ENCODE measurements at regions of chr9 and their contacts with region 1.

Region 1: GRCh38 chr9:133030317-133031129 is at the start of gene GTF3C5:
- DNase-seq: peak; percentile 83
- ATAC-seq: peak; percentile 97
- H3K4me3 Mint-ChIP-seq: peak within 1 kb of the TSS; percentile 99
- H3K27ac Mint-ChIP-seq: peak within 1 kb of the TSS; percentile 98
- H3K4me1 Mint-ChIP-seq: peaks cover 48% of the 10 kb centered on the region
- H3K27me3 Mint-ChIP-seq: no peaks in the 10 kb centered on the region
- CTCF ChIP-seq: no peak
- total RNA-seq, gene GTF3C5: 53.6 and 56.6 TPM in 2 replicates

Region 2: GRCh38 chr9:132944302-132945185 is 86.0 kb before region 1 on chr9 and contains the start of gene TSC1:
- CTCF ChIA-PET with region 1: no interaction called
- POLR2A ChIA-PET with region 1: interaction called, 21 read pairs
- intact Hi-C with region 1: loop called (anchors 1 kb)
- DNase-seq: peak; percentile 96
- ATAC-seq: peak; percentile 90
- H3K4me3 Mint-ChIP-seq: peak within 1 kb of the TSS; percentile 98
- H3K27ac Mint-ChIP-seq: peak within 1 kb of the TSS; percentile 100
- H3K4me1 Mint-ChIP-seq: peaks cover 29% of the 10 kb centered on the region
- H3K27me3 Mint-ChIP-seq: no peaks in the 10 kb centered on the region
- CTCF ChIP-seq: no peak
- total RNA-seq, gene TSC1: 51.7 and 61.4 TPM in 2 replicates

Region 3: GRCh38 chr9:133054966-133055365 is 24.4 kb after region 1 on chr9:
- CTCF ChIA-PET with region 1: no interaction called
- POLR2A ChIA-PET with region 1: no interaction called
- intact Hi-C with region 1: no loop called
- DNase-seq: no peak
- ATAC-seq: no peak
- H3K4me3 Mint-ChIP-seq: no peak overlapping the region
- H3K27ac Mint-ChIP-seq: no peak overlapping the region
- H3K4me1 Mint-ChIP-seq: peaks cover 13% of the 10 kb centered on the region
- H3K27me3 Mint-ChIP-seq: no peaks in the 10 kb centered on the region
- CTCF ChIP-seq: no peak

Region 4: GRCh38 chr9:133121198-133121939 is 90.8 kb after region 1 on chr9 and contains the start of gene RALGDS:
- CTCF ChIA-PET with region 1: no interaction called
- POLR2A ChIA-PET with region 1: interaction called, 6 read pairs
- intact Hi-C with region 1: loop called (anchors 1 kb)
- DNase-seq: peak; percentile 86
- ATAC-seq: peak; percentile 81
- H3K4me3 Mint-ChIP-seq: peak within 1 kb of the TSS; percentile 82
- H3K27ac Mint-ChIP-seq: peak within 1 kb of the TSS; percentile 94
- H3K4me1 Mint-ChIP-seq: peaks cover 68% of the 10 kb centered on the region
- H3K27me3 Mint-ChIP-seq: no peaks in the 10 kb centered on the region
- CTCF ChIP-seq: no peak
- total RNA-seq, gene RALGDS: 21.2 and 29.2 TPM in 2 replicates

Region 5: GRCh38 chr9:133149126-133150107 is 118.9 kb after region 1 on chr9:
- CTCF ChIA-PET with region 1: interaction called, 8 read pairs
- POLR2A ChIA-PET with region 1: interaction called, 20 read pairs
- intact Hi-C with region 1: loop called (anchors 1 kb)
- DNase-seq: peak; percentile 83
- ATAC-seq: peak; percentile 71
- H3K4me3 Mint-ChIP-seq: peak overlapping the region; percentile 78
- H3K27ac Mint-ChIP-seq: peak overlapping the region; percentile 71
- H3K4me1 Mint-ChIP-seq: peaks cover 39% of the 10 kb centered on the region
- H3K27me3 Mint-ChIP-seq: no peaks in the 10 kb centered on the region
- CTCF ChIP-seq: no peak

Region 6: DNA sequence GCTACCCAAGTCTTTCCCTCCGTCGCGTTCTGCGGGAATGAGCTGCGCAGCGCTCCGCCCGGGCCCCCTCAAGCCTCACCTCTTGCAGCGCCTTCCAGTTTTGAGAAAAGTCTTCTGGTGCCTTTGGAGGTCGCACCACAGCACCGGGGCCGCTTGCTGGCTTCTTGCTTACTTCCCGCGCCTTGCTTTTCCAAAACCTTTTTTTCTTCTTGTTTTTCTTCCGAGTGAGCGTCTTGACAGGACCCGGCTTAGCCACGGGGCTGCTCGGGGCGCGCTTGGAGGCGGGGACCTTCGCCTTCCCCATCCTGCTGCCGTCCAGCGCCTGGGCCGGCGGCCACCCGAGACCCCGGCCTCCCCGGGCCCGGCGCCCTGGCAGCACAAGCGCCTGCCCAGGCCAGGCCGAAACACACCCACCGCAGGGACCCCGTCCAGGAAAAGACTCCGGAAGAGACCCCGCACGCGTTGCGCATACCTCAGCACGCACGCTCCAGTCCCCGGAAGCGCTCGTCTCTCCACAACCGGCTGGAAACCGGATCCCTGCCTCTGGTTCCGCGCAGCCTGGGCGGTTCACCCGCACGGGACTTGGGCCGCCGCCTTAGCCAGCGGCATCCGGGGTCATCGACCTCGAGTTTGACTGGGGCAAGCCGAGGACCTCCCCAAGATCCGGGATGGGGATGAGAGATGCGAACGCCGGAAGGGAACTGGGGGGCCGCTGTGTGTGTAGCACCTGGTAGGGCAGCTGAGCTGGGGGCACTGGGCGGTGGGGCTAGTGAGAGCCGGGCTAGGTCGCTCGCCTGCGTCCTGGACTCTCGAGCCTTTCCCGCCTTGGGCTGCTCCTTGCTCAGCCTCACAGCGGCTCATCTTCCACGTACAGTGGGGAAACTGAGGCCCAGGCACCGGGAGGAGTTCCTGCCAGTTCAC is 387.3 kb after region 1 on chr9 and contains the start of gene REXO4:
- CTCF ChIA-PET with region 1: no interaction called
- POLR2A ChIA-PET with region 1: no interaction called
- intact Hi-C with region 1: loop called (anchors 1 kb)
- DNase-seq: peak; percentile 86
- ATAC-seq: peak; percentile 84
- H3K4me3 Mint-ChIP-seq: peak within 1 kb of the TSS; percentile 90
- H3K27ac Mint-ChIP-seq: peak within 1 kb of the TSS; percentile 91
- H3K4me1 Mint-ChIP-seq: peaks cover 71% of the 10 kb centered on the region
- H3K27me3 Mint-ChIP-seq: no peaks in the 10 kb centered on the region
- CTCF ChIP-seq: no peak
- total RNA-seq, gene REXO4: 31.6 and 33.3 TPM in 2 replicates

Region 7: DNA sequence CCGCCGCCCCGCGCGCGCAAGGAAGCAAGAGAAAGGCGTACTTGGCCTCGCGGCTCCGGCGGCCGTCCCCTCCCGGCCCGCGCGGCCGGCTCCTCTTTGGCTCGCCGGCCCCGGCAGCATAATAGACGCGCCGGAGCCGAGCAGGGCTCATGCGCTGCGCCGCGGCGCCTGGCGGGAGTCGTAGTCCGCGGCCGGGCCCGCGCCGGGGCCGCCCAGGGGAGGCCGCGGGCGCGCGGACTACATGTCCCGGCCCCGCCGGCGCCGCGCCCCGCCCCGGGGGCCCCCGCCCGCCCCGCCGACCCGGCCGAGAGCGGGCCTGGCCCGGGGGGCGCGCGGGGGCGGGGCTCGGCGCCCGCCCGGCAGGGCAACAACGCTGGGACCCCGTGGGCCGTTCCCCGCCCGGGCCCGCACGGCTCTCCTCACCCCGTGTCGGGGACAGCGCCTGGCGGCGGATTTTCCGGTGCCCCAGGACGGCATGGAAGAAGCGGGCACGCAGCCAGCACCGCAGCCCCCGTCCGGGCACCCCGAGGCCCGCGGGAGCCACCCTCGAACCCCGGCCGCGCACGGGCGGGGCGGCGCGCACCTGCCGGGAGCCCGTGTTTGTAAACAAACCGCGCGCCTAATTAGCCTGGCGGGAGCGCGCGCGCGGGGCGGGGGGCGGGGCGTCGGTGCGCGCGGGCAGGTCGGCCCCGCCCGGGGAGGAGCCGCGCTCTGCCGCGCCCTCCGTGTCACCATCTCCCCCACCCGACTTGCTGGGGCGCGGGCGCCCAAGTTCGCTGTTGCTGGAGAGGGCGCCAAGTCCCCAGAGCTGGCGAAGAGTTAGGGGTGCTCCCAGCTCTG is 1037.6 kb after region 1 on chr9 and contains the start of gene BRD3:
- CTCF ChIA-PET with region 1: no interaction called
- POLR2A ChIA-PET with region 1: no interaction called
- intact Hi-C with region 1: loop called (anchors 1 kb)
- DNase-seq: peak; percentile 83
- ATAC-seq: peak; percentile 84
- H3K4me3 Mint-ChIP-seq: peak within 1 kb of the TSS; percentile 85
- H3K27ac Mint-ChIP-seq: peak within 1 kb of the TSS; percentile 82
- H3K4me1 Mint-ChIP-seq: peaks cover 38% of the 10 kb centered on the region
- H3K27me3 Mint-ChIP-seq: peaks cover 12% of the 10 kb centered on the region
- CTCF ChIP-seq: no peak
- total RNA-seq, gene BRD3: 17.0 and 18.3 TPM in 2 replicates